ENCODE measurements at regions of chrX and their contacts with region 1.

Region 1: DNA sequence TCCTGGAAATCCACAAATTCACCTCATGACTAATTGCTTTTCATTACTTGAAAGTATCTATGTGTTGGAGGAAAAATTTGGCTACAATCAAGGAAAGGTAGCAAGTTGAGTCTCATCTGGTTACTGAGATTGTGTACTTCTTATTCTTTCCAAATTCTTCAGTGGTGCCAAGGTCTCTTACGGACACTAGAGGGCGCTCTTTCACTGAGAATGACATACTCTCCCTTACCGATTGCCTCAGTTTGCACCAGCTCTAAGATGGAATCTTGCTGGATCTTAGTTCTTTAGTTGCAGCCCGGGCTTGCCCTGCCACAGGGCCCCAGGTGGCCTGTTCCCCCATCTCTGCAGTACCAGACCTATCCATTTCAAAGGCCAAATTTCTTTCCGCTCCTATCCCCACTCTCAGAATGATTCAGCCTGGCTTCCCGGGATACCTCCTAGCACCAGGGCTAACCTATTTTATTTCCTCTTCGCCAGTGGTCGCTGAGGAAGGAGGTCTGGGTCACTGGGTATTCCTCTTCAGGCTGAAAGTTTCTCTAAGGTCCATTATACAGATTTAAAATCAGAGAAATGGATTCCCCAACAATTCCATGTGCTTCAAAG is 24.6 kb upstream of the GPR50 start:
- DNase-seq: peak; percentile 38
- ATAC-seq: peak; percentile 53
- H3K4me3 Mint-ChIP-seq: no peak overlapping the region
- H3K27ac Mint-ChIP-seq: no peak overlapping the region
- H3K4me1 Mint-ChIP-seq: no peaks in the 10 kb centered on the region
- H3K27me3 Mint-ChIP-seq: peaks cover 12% of the 10 kb centered on the region

Region 2: DNA sequence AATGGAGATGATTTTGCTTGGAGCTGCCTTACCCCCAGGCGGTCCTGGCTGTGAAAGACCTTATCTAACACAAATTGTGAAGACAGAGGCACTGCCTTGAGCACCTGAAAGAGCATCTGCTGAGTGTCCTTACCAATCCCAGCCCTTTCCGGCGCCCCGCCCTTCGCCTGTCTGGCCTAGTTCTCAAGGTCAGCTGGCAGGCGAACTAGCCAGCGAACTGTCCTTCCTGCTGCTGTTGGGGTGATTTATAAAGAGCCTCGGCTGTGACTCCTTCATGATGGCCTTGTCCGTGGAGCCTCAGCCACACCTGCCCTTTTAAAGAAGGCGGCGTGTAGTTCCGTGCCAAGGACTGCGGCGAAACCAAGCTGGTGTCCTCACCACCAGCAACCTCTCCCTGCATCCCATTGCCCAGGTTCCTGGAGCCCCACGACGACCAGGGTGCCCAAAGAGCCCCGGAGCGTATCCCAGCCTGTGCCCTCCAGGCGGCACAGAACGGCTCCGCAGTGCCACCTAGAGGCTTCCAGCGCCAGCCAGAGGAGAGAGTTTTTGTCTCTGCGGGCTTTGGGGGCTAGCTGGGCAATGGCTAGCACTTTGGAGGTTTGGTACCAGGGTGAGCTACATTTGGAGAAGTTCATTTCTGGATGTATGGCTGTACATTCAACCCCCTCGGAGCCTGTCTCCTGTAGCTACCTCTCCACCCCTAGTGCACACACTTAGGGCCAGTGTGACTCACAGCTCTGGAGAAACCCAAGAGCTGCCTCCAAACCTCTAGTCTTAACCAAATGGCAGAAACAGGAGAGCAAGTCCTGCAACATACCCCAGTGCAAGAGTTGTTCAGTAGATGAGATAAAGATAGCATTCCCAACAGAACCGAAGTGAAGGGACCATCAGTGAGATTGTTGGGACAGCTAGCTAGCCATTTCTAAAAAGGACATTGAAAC is 208.4 kb after region 1 on chrX:
- CTCF ChIA-PET with region 1: interaction called, 4 read pairs
- POLR2A ChIA-PET with region 1: no interaction called
- intact Hi-C with region 1: loop called (anchors 1 to 5 kb)
- DNase-seq: peak; percentile 62
- ATAC-seq: peak; percentile 57
- H3K4me3 Mint-ChIP-seq: peak overlapping the region; percentile 32
- H3K27ac Mint-ChIP-seq: no peak overlapping the region
- H3K4me1 Mint-ChIP-seq: no peaks in the 10 kb centered on the region
- H3K27me3 Mint-ChIP-seq: peaks cover 8% of the 10 kb centered on the region

Region 3: DNA sequence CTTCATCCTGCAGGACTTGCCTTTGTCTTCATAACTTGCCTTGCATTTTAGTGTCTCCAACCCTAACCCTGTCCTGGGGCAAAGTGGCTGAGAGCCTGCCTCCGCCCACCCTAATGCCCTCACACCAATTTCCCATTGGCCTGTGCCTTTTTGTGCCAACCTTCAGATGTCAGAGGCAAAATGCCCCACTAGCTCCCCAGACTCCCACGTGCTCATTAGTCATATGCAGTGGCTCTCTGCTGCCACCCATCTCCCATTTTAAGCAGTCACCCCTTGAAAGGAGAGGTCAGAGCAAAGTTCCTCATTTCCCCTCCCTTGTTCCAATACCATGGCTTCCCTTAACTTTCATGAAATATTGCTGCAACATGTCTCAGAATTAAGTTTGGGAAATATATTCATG is 336.9 kb after region 1 on chrX:
- CTCF ChIA-PET with region 1: interaction called, 5 read pairs
- POLR2A ChIA-PET with region 1: no interaction called
- intact Hi-C with region 1: loop called (anchors 2 to 5 kb)
- DNase-seq: peak; percentile 35
- ATAC-seq: peak; percentile 55
- H3K4me3 Mint-ChIP-seq: no peak overlapping the region
- H3K27ac Mint-ChIP-seq: no peak overlapping the region
- H3K4me1 Mint-ChIP-seq: peaks cover 3% of the 10 kb centered on the region
- H3K27me3 Mint-ChIP-seq: no peaks in the 10 kb centered on the region

Region 4: DNA sequence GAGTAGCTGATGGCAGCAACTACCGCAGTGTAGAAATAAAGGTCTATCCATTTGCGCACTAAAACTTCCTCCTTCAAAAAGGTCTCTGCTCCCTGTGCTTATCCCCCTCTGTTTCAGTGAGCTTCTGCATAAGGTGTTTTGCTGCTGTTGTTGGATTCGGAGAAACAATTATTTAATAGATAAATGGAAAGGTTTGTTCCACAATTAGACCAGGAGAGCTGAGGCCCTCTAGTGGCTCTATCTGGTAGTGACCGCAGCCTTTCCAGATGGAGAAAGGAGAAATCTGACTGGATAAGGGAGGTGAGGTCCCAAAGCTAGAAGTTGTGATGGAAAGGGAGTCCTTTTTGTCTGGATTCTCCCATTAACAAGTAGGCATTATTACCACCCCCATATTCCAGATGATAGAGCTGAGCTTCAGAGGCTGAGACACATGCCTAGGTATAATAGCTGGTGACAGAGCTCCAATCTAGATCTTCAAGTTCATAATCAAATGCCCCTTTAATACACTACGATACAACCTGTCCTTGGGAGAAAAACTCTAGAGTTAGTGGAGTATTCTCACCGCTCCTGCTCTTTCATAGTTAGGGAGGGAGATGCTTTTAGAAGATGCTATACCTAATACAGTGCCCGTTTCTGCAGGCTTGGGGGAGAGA is 1480.8 kb after region 1 on chrX:
- CTCF ChIA-PET with region 1: interaction called, 3 read pairs
- POLR2A ChIA-PET with region 1: no interaction called
- intact Hi-C with region 1: loop called in 1 of 2 experiments (anchors 10 kb)
- DNase-seq: peak; percentile 58
- ATAC-seq: no peak
- H3K4me3 Mint-ChIP-seq: no peak overlapping the region
- H3K27ac Mint-ChIP-seq: no peak overlapping the region
- H3K4me1 Mint-ChIP-seq: no peaks in the 10 kb centered on the region
- H3K27me3 Mint-ChIP-seq: peaks cover 14% of the 10 kb centered on the region

Measured in activated CD4-positive, alpha-beta T cell treated with anti-CD3 and anti-CD28 coated beads for 36 hours (primary cell).